ENCODE measurements at regions of chr1 and their contacts with region 1.

Region 1: DNA sequence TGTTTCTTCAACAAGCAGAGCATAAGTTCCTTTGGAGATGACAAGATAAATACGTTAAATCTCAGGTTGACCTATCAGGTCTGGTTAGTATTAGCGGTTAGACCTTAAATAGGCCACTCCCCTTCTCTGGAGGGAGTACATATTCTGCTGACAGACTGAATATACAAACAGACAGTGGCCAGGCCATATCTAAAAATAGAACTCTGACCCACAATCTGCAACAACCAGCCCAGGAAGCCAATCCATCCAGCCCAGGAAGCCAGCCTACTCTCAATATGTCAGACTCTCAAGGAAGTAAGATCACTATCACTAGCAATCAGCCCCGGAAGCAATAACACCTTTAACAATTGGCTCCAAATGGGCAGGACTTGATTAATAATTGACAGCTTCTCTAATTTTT is 6.7 kb downstream of the IL20 start:
- DNase-seq: no peak
- ATAC-seq: no peak
- H3K4me3 Mint-ChIP-seq: no peak overlapping the region
- H3K27ac Mint-ChIP-seq: no peak overlapping the region
- H3K4me1 Mint-ChIP-seq: peaks cover 0 to 2% (median 0%) of the 10 kb centered on the region in 4 donors
- H3K27me3 Mint-ChIP-seq: no peaks in the 10 kb centered on the region

Region 2: DNA sequence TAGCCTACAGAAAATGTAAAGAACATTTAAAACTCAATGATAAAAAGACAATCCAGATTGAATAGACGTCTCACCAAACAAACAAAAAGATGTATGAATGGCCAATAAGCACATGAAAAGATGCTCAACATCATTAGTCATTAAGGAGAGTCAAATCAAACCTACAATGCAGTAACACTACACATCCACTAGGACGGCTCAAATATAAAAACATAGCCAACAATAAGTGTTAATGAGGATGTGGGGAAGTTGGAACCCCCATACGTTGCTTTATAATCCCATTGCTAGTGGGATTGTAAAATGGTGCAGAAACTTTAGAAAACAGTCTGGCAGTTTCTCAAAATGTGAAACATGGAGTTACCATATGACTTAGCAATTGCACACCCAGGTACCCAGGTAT is 10.4 kb after region 1 on chr1:
- POLR2A ChIA-PET with region 1: no interaction called
- DNase-seq: no peak
- ATAC-seq: no peak
- H3K4me3 Mint-ChIP-seq: no peak overlapping the region
- H3K27ac Mint-ChIP-seq: no peak overlapping the region
- H3K4me1 Mint-ChIP-seq: peaks cover 0 to 3% (median 0%) of the 10 kb centered on the region in 4 donors
- H3K27me3 Mint-ChIP-seq: no peaks in the 10 kb centered on the region

Region 3: GRCh38 chr1:206895830-206896242 is 23.7 kb after region 1 on chr1:
- POLR2A ChIA-PET with region 1: interaction called, 10 read pairs
- DNase-seq: no peak
- ATAC-seq: no peak
- H3K4me3 Mint-ChIP-seq: no peak overlapping the region
- H3K27ac Mint-ChIP-seq: peak overlapping the region in 5 of 10 donors; percentile 26 to 64 (median 51)
- H3K4me1 Mint-ChIP-seq: peaks cover 29 to 64% (median 51%) of the 10 kb centered on the region in 4 donors
- H3K27me3 Mint-ChIP-seq: no peaks in the 10 kb centered on the region

Region 4: DNA sequence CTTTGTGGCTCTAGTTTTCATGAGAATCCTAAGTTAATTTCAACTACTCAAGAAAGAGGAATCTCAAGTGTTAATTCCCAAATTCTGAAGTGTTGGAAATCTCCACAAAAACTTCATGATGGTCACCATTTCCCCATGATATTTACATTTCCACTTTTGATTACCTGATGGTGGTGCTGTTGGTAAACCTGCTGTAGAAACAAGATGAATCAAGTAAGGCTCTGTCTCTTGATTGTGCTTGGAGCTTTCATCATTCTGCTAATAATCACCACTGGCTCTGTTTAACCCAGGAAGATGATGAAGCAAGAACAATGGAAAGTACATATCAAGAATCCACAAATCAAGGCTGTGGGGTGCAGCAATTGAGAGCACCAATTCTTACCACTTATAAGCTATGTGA is 309.7 kb after region 1 on chr1:
- POLR2A ChIA-PET with region 1: no interaction called
- DNase-seq: peak in 3 of 10 donors; percentile 13 to 18 (median 17)
- ATAC-seq: no peak
- H3K4me3 Mint-ChIP-seq: no peak overlapping the region
- H3K27ac Mint-ChIP-seq: no peak overlapping the region
- H3K4me1 Mint-ChIP-seq: peaks cover 0 to 7% (median 3%) of the 10 kb centered on the region in 4 donors
- H3K27me3 Mint-ChIP-seq: peaks cover 0 to 3% (median 0%) of the 10 kb centered on the region in 5 donors